ENCODE measurements at regions of chr5 and their contacts with region 1.

Region 1: DNA sequence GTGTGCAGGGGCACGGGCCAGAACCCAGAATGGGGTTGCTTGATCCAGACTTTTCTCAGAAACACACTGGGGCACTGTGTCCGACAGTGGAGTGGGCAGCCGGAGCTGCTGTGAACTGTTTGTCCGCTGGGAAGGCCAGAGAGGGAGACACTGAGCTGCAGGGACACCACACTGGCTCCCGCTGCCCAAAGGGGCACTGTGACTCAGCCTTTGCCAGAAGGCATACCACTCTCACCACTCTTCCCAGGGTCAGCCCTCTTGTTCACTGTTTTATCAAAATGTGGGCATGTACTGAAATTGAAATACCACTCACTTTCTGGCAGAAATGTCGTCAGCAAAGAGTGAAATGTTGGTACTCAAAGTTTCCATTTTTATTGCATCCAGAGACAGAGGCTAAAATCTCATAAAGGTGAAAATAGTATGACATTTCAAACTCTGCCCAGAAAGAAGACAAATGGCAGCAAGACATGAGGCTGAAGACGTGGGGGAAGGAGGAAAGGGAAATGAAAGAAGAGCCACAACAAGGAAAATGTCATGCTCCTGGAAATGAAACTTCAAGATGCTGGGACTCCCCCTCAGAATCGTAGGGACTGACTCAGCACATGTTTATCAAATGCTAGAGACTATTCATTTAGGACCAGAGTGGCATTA is 4.5 kb upstream of the IL7R start:
- DNase-seq: peak; percentile 78
- H3K4me3 Mint-ChIP-seq: peak overlapping the region; percentile 91
- H3K27ac Mint-ChIP-seq: peak overlapping the region; percentile 100
- H3K4me1 Mint-ChIP-seq: peaks cover 63% of the 10 kb centered on the region
- H3K27me3 Mint-ChIP-seq: no peaks in the 10 kb centered on the region

Region 2: DNA sequence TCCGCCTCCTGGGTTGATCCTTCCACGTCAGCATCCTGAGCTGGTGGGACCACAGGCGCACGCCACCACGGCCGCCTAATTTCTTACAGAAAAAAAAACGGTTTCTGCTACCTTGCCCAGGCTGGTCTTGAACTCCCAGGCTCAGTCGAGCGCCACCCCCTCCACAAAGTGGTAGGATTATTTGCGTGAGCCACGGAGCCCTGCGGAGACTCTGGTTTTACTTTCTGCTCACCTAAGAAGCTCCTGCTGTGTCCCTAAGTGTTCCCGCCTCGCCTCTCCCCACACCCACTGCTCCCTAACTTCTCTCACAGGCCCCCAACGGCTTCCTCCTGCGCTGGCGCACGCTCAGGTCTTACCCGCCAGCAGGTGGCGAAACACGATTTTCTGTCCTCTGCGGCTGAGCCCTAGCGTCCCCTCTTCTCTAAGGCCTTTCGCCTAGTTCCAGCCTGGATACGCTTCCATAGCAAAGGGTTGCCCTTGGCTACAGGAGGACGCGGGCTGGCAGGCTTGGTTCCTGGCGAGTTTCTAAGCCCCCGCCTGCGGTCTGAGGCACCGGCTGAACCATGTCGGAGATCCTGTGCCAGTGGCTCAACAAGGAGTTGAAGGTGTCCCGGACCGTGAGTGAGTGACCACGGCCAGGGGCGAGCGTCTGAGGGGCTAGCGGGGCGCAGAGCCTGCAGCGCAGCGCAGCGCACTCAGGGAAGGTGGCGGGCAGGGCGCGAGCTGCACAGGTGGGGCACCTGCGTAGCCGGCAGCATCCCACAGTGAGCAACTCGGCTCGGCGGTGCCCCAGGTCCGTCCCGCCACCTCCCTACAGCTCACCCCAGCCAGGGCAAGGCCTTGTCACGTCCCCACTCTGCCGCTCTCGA is 234.5 kb before region 1 on chr5 and contains the start of gene SPEF2:
- CTCF ChIA-PET with region 1: interaction called, 3 read pairs
- intact Hi-C with region 1: loop called (anchors 1 kb)
- DNase-seq: peak; percentile 86
- H3K4me3 Mint-ChIP-seq: peak within 1 kb of the TSS; percentile 90
- H3K27ac Mint-ChIP-seq: peak within 1 kb of the TSS; percentile 88
- H3K4me1 Mint-ChIP-seq: peaks cover 16% of the 10 kb centered on the region
- H3K27me3 Mint-ChIP-seq: no peaks in the 10 kb centered on the region
- total RNA-seq, gene SPEF2: 6.5 to 6.6 TPM

Region 3: DNA sequence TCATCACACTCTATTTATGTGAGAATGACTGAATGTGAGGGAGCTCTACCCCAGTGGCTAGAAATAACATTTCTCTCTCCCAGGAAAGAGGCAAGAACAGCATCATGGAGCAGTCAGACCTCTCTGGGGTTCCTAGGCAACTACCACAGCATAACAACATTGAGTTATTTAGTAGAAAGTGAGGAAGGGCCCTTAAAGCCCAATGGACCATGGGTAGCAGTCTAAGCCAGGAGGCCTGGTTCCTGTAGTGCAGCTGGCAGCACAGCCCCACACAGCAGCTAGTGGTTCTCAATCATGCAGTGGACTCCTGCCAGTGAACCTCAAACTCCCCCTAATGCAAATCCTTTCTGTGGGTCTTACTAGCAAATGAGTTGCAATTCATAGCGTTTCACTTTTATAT is 179.2 kb before region 1 on chr5:
- CTCF ChIA-PET with region 1: no interaction called
- intact Hi-C with region 1: loop called (anchors 1 kb)
- DNase-seq: peak; percentile 73
- H3K4me3 Mint-ChIP-seq: no peak overlapping the region
- H3K27ac Mint-ChIP-seq: peak overlapping the region; percentile 75
- H3K4me1 Mint-ChIP-seq: peaks cover 63% of the 10 kb centered on the region
- H3K27me3 Mint-ChIP-seq: no peaks in the 10 kb centered on the region

Region 4: GRCh38 chr5:35785601-35786085 is 66.6 kb before region 1 on chr5:
- CTCF ChIA-PET with region 1: interaction called, 163 read pairs
- intact Hi-C with region 1: loop called (anchors 1 kb)
- DNase-seq: peak; percentile 76
- H3K4me3 Mint-ChIP-seq: peak overlapping the region; percentile 32
- H3K27ac Mint-ChIP-seq: peak overlapping the region; percentile 88
- H3K4me1 Mint-ChIP-seq: peaks cover 79% of the 10 kb centered on the region
- H3K27me3 Mint-ChIP-seq: no peaks in the 10 kb centered on the region

Region 5: DNA sequence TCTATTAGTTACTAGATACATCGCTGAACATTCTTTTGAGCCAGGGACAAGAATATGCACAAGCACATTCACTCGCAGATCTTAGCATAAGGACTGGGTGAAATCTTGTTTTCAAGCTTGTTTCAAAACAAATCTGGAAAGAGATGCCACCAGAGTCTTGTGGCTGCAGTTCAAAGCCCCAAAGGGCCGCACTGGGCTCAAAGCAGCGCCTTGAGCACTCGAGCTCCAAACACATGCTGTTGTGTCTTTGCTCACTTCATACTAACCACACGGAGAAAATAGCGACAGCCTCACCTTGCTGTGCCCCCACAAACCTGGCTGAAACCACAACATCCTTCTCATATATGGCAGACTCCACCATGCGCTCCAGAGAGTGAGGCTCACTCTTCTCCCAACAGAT is 29.7 kb before region 1 on chr5:
- CTCF ChIA-PET with region 1: interaction called, 28 read pairs
- intact Hi-C with region 1: loop called (anchors 1 kb)
- DNase-seq: peak; percentile 56
- H3K4me3 Mint-ChIP-seq: peak overlapping the region; percentile 30
- H3K27ac Mint-ChIP-seq: peak overlapping the region; percentile 95
- H3K4me1 Mint-ChIP-seq: peaks cover 87% of the 10 kb centered on the region
- H3K27me3 Mint-ChIP-seq: no peaks in the 10 kb centered on the region

Region 6: GRCh38 chr5:35884115-35884788 is 32.0 kb after region 1 on chr5:
- CTCF ChIA-PET with region 1: interaction called, 3 read pairs
- intact Hi-C with region 1: loop called (anchors 1 kb)
- DNase-seq: peak; percentile 60
- H3K4me3 Mint-ChIP-seq: peak overlapping the region; percentile 25
- H3K27ac Mint-ChIP-seq: peak overlapping the region; percentile 93
- H3K4me1 Mint-ChIP-seq: peaks cover 49% of the 10 kb centered on the region
- H3K27me3 Mint-ChIP-seq: no peaks in the 10 kb centered on the region

Region 7: DNA sequence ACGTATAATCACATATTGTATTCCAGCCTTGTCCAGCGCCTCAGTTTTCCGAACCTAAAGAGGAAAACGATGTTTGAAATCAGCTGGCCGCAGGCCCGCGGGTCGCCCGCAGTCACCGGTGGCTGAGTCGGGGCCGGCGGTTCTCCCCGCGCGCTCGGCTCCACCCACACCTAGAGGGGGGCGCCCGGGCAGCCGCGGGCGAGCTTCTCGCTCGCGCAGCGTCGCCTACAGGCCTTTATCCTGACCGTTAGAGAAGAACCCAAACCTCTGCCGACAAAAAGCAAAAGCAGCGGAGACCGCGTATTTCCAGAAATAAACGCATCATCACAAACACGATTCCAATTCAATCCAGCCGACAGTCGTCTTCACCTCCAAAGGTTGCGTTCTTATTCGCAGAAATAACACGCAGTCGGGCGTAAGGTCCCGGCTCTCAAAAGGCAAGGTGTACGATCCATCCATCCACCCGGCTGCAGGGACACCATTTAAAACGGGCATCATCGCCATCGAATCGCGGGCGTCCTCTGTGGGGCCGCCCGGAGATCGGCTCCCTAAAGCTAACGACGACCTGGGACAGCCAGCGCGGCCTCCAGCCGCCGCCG is 1023.7 kb after region 1 on chr5:
- CTCF ChIA-PET with region 1: no interaction called
- intact Hi-C with region 1: loop called (anchors 10 kb)
- DNase-seq: peak; percentile 77
- H3K4me3 Mint-ChIP-seq: peak overlapping the region; percentile 83
- H3K27ac Mint-ChIP-seq: peak overlapping the region; percentile 96
- H3K4me1 Mint-ChIP-seq: peaks cover 25% of the 10 kb centered on the region
- H3K27me3 Mint-ChIP-seq: no peaks in the 10 kb centered on the region